Activated CD8-positive, alpha-beta T cell treated with anti-CD3 and anti-CD28 coated beads, Interleukin-2, amount 10 ng/mL, durations not matched to agents 7 days and 5 days (primary cell): ENCODE measurements at regions of chr1 and their contacts with region 1.

Region 1: DNA sequence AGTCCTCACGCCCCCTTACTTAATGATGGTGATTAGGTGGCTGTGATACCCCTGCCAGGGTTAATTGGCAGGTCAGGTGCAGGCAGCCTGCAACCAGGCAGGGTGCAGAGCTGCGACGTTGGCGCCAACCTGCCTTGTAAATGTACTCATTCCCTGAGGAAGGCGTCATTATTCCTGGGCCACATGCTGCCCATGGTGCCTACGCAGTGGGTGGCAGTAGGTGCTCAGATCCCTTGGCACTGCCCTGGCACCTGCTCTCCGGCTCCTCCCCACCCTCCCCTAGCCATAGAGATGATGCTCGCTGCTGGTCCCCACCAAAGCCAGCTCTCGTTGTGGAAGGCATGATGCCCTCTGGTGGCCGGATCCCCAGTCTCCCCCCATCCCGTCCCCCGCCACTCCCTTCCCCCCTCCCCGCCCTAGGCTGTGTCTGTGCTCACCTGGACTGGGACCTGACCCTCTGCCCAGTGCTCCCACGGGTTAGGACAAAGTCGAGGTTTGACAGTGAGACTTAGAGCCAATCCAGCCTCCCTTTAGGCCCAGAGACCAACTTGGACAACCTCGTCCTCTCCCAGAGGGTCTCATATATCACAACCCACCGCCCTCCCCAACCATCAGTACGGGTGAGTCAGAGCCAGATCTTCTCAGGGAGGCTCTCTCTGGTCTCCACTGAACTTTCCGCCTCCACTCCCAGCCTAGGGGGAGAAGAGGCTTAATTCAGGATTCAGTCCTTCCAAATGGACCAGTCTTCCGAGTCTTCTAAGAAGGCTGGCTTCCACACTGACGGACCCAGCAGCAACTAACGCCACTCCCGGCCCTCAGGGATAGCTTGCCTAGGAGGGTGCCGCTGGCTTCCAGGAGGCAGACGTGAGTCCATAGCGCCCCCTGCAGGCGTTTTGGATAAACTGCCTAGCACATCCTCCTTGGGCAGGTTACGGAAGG is 5.7 kb downstream of the KRTCAP2 start:
- DNase-seq: peak; percentile 92
- ATAC-seq: peak; percentile 80
- H3K4me3 Mint-ChIP-seq: peak overlapping the region; percentile 53
- H3K27ac Mint-ChIP-seq: no peak overlapping the region
- H3K4me1 Mint-ChIP-seq: peaks cover 25% of the 10 kb centered on the region
- H3K27me3 Mint-ChIP-seq: no peaks in the 10 kb centered on the region

Region 2: DNA sequence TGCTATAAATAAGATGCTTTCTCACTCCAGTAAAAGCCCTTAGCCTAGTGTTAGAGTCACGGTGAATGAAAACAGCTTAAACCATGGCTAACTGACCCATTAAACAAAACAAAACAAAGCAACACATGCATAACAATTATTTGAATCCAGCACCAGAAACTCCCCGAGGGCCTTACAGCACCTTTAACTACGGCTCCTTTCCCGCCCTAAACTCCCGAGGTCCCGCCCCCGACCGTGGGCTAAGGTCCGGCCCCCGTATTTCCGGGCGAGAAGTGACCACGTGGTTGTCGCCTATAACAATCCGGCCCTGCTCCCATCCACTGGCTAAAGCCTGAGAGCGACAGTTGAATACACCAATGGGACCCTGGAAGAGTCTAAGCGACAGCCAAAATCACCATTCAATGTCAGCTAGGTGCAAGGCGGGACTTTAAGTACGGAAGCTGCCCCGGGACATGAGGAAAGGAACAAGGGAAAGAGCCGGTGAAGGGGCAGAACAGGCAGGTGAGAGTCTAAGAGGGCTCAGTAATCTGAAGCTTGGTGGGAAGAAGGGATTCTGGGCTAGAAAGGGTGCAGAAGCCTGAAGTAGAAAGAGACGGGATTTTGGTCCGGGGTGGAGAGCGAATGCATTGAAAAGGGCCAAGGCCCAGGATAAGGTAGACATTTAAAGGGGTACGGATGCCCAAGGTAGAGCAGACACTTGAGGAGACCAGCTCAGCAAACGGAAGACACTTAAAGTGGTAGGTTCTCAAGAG is 184.4 kb before region 1 on chr1 and contains the start of gene FLAD1:
- CTCF ChIA-PET with region 1: no interaction called
- POLR2A ChIA-PET with region 1: no interaction called
- DNase-seq: peak; percentile 99
- ATAC-seq: peak; percentile 100
- H3K4me3 Mint-ChIP-seq: no peak within 1 kb of the TSS
- H3K27ac Mint-ChIP-seq: peak within 1 kb of the TSS; percentile 67
- H3K4me1 Mint-ChIP-seq: peaks cover 20% of the 10 kb centered on the region
- H3K27me3 Mint-ChIP-seq: no peaks in the 10 kb centered on the region
- total RNA-seq, gene FLAD1: 39.8 to 45.2 TPM

Region 3: GRCh38 chr1:155127105-155127964 is 40.1 kb before region 1 on chr1 and contains the start of gene EFNA1:
- CTCF ChIA-PET with region 1: interaction called, 13 read pairs
- POLR2A ChIA-PET with region 1: interaction called, 4 read pairs
- DNase-seq: peak; percentile 39
- ATAC-seq: peak; percentile 85
- H3K4me3 Mint-ChIP-seq: peak within 1 kb of the TSS; percentile 68
- H3K27ac Mint-ChIP-seq: no peak within 1 kb of the TSS
- H3K4me1 Mint-ChIP-seq: peaks cover 30% of the 10 kb centered on the region
- H3K27me3 Mint-ChIP-seq: peaks cover 50% of the 10 kb centered on the region
- total RNA-seq, gene EFNA1: not detected

Region 4: DNA sequence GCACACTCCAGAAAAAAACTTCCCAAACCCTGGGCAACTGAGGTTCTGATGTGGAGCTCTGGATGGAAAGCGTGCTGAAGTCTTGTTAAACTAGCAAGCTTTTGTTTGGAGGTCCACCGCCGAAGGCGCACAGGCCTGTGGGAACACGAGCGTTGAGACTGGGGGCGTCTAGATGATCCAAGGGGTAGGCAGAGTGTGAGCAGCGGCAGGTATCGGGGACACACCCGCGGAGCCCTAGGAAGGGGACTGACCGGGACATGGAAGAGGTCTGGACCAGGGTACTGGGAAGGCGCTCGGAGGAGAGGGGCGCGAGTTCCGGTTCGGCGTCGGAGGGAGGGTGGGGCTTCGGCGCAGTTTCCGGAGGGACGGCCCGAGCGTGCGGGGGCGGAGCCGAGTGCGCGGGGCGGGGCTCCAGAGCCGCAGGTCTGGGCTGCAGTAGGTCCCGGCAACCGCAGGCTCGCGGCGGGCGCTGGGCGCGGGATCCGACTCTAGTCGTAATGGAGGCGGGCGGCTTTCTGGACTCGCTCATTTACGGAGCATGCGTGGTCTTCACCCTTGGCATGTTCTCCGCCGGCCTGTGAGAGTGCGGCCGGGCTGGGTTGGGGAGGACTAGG is 31.9 kb before region 1 on chr1 and contains the start of gene SLC50A1:
- CTCF ChIA-PET with region 1: interaction called, 41 read pairs
- POLR2A ChIA-PET with region 1: interaction called, 5 read pairs
- DNase-seq: peak; percentile 95
- ATAC-seq: peak; percentile 84
- H3K4me3 Mint-ChIP-seq: peak within 1 kb of the TSS; percentile 98
- H3K27ac Mint-ChIP-seq: peak within 1 kb of the TSS; percentile 99
- H3K4me1 Mint-ChIP-seq: peaks cover 47% of the 10 kb centered on the region
- H3K27me3 Mint-ChIP-seq: no peaks in the 10 kb centered on the region
- total RNA-seq, gene SLC50A1: 37.5 to 38.9 TPM

Region 5: DNA sequence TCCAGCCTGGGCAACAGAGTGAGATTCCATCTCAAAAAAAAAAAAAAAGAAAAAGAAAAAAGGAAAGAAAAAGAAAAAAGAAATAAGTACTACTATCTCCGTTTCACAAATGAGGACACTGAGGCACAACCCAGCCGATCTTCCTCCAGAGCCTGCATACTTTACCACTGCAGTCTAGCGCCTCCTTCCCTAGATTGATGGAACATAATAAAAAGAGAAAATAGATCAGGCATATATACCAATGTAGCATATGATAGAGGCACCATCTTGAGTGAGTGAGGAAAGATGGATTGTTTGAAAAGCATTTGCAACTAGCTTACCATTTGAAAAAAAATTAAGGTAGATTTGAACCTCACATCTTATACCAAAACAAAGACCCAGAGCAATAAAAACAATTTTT is 21.9 kb before region 1 on chr1:
- CTCF ChIA-PET with region 1: interaction called, 18 read pairs
- POLR2A ChIA-PET with region 1: interaction called, 3 read pairs
- DNase-seq: no peak
- ATAC-seq: no peak
- H3K4me3 Mint-ChIP-seq: no peak overlapping the region
- H3K27ac Mint-ChIP-seq: no peak overlapping the region
- H3K4me1 Mint-ChIP-seq: peaks cover 2% of the 10 kb centered on the region
- H3K27me3 Mint-ChIP-seq: peaks cover 23% of the 10 kb centered on the region

Region 6: DNA sequence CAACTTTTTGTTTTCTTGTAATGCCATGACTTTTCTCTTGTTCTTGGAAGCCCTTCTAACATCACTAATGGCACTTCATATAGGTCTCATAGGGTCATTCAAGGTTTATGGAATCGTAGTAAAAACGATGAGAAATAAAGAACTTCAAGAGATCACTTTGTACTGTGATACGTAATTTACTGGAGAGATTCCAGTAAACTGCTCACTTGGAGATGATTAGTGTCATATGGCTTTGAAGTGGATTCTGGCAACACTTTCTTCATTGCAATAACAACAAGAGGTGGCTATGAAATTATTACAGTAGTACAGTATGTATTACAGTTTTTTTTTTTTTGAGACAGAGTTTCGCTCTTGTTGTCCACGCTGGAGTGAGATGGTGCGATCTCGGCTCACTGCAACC is 256.7 kb after region 1 on chr1:
- CTCF ChIA-PET with region 1: no interaction called
- POLR2A ChIA-PET with region 1: no interaction called
- DNase-seq: no peak
- ATAC-seq: no peak
- H3K4me3 Mint-ChIP-seq: no peak overlapping the region
- H3K27ac Mint-ChIP-seq: no peak overlapping the region
- H3K4me1 Mint-ChIP-seq: peaks cover 4% of the 10 kb centered on the region
- H3K27me3 Mint-ChIP-seq: no peaks in the 10 kb centered on the region